Endothelial cell of umbilical vein (primary cell): ENCODE measurements at regions of chr9 and their contacts with region 1.

Region 1: GRCh38 chr9:18208154-18209059 is 265.5 kb upstream of the ADAMTSL1 start:
- DNase-seq: peak; percentile 52
- H3K4me3 ChIP-seq: no peak overlapping the region
- H3K27ac ChIP-seq: no peak overlapping the region
- H3K4me1 ChIP-seq: no peaks in the 10 kb centered on the region
- H3K27me3 ChIP-seq: no peaks in the 10 kb centered on the region
- CTCF ChIP-seq: peak; percentile 39 to 62
- POLR2A ChIP-seq: no peak

Region 2: DNA sequence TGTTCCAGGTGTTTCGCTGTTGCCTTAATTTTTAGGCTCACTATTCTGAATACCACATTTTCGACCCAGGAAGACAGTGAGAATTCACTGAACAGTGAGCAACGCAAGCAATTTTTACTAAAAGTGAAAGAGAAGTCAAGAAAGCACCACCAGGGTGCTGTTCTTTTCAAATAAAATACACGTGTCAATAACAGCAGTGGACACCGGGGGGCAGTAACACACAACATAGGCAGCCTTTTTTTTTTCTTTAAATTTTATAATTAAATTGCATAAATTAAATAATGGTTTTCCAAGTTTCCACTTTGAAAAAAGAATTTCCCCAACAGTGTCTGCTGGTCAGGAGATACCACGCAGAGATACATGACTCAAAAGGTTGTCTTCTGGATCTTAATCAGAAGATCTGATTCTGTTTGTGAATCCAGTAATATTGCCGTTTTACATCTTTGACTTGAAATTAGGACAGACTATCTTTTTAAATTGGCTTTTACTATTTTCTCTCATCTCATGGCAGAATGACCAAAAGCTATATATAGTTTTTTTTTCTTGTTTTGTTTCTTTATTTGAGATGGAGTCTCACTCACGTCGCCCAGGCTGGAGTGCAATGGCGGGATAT is 676.7 kb before region 1 on chr9:
- CTCF ChIA-PET with region 1: interaction called, 8 read pairs
- POLR2A ChIA-PET with region 1: no interaction called
- dilution Hi-C with region 1: no loop called
- intact Hi-C with region 1: loop called (anchors 2 kb)
- DNase-seq: peak; percentile 53
- H3K4me3 ChIP-seq: no peak overlapping the region
- H3K27ac ChIP-seq: no peak overlapping the region
- H3K4me1 ChIP-seq: no peaks in the 10 kb centered on the region
- H3K27me3 ChIP-seq: no peaks in the 10 kb centered on the region
- CTCF ChIP-seq: peak; percentile 48 to 56
- POLR2A ChIP-seq: no peak

Region 3: GRCh38 chr9:17816431-17817027 is 391.9 kb before region 1 on chr9:
- CTCF ChIA-PET with region 1: interaction called, 150 read pairs
- POLR2A ChIA-PET with region 1: no interaction called
- dilution Hi-C with region 1: no loop called
- intact Hi-C with region 1: loop called (anchors 1 kb)
- DNase-seq: no peak
- H3K4me3 ChIP-seq: no peak overlapping the region
- H3K27ac ChIP-seq: no peak overlapping the region
- H3K4me1 ChIP-seq: no peaks in the 10 kb centered on the region
- H3K27me3 ChIP-seq: peaks cover 1 to 3% of the 10 kb centered on the region in 2 experiments
- CTCF ChIP-seq: no peak
- POLR2A ChIP-seq: no peak

Region 4: GRCh38 chr9:18189871-18190670 is 18.3 kb before region 1 on chr9:
- CTCF ChIA-PET with region 1: interaction called, 18 read pairs
- POLR2A ChIA-PET with region 1: no interaction called
- dilution Hi-C with region 1: no loop called
- intact Hi-C with region 1: no loop called
- DNase-seq: no peak
- H3K4me3 ChIP-seq: no peak overlapping the region
- H3K27ac ChIP-seq: no peak overlapping the region
- H3K4me1 ChIP-seq: no peaks in the 10 kb centered on the region
- H3K27me3 ChIP-seq: peaks cover 0 to 2% of the 10 kb centered on the region in 2 experiments
- CTCF ChIP-seq: no peak
- POLR2A ChIP-seq: no peak

Region 5: GRCh38 chr9:18195223-18195622 is 13.2 kb before region 1 on chr9:
- CTCF ChIA-PET with region 1: interaction called, 18 read pairs
- POLR2A ChIA-PET with region 1: no interaction called
- dilution Hi-C with region 1: no loop called
- intact Hi-C with region 1: no loop called
- DNase-seq: no peak
- H3K4me3 ChIP-seq: no peak overlapping the region
- H3K27ac ChIP-seq: no peak overlapping the region
- H3K4me1 ChIP-seq: no peaks in the 10 kb centered on the region
- H3K27me3 ChIP-seq: peaks cover 2 to 3% of the 10 kb centered on the region in 2 experiments
- CTCF ChIP-seq: no peak
- POLR2A ChIP-seq: no peak

Region 6: GRCh38 chr9:18238254-18238653 is 29.8 kb after region 1 on chr9:
- CTCF ChIA-PET with region 1: interaction called, 16 read pairs
- POLR2A ChIA-PET with region 1: no interaction called
- dilution Hi-C with region 1: no loop called
- intact Hi-C with region 1: no loop called
- DNase-seq: peak; percentile 97
- H3K4me3 ChIP-seq: peak overlapping the region in 1 of 3 experiments; percentile 27
- H3K27ac ChIP-seq: peak overlapping the region; percentile 93
- H3K4me1 ChIP-seq: peaks cover 43% of the 10 kb centered on the region
- H3K27me3 ChIP-seq: no peaks in the 10 kb centered on the region
- CTCF ChIP-seq: no peak
- POLR2A ChIP-seq: no peak

Region 7: GRCh38 chr9:18743971-18744370 is 535.6 kb after region 1 on chr9:
- CTCF ChIA-PET with region 1: no interaction called
- POLR2A ChIA-PET with region 1: no interaction called
- dilution Hi-C with region 1: no loop called
- intact Hi-C with region 1: no loop called
- DNase-seq: no peak
- H3K4me3 ChIP-seq: no peak overlapping the region
- H3K27ac ChIP-seq: no peak overlapping the region
- H3K4me1 ChIP-seq: no peaks in the 10 kb centered on the region
- H3K27me3 ChIP-seq: no peaks in the 10 kb centered on the region
- CTCF ChIP-seq: no peak
- POLR2A ChIP-seq: no peak

Region 8: GRCh38 chr9:19028835-19029451 is 820.5 kb after region 1 on chr9:
- CTCF ChIA-PET with region 1: interaction called, 11 read pairs
- POLR2A ChIA-PET with region 1: no interaction called
- dilution Hi-C with region 1: no loop called
- intact Hi-C with region 1: loop called (anchors 1 kb)
- DNase-seq: peak; percentile 59
- H3K4me3 ChIP-seq: no peak overlapping the region
- H3K27ac ChIP-seq: no peak overlapping the region
- H3K4me1 ChIP-seq: no peaks in the 10 kb centered on the region
- H3K27me3 ChIP-seq: no peaks in the 10 kb centered on the region
- CTCF ChIP-seq: peak; percentile 58 to 66
- POLR2A ChIP-seq: no peak